ENCODE measurements at regions of chr12 and their contacts with region 1.

Region 1: DNA sequence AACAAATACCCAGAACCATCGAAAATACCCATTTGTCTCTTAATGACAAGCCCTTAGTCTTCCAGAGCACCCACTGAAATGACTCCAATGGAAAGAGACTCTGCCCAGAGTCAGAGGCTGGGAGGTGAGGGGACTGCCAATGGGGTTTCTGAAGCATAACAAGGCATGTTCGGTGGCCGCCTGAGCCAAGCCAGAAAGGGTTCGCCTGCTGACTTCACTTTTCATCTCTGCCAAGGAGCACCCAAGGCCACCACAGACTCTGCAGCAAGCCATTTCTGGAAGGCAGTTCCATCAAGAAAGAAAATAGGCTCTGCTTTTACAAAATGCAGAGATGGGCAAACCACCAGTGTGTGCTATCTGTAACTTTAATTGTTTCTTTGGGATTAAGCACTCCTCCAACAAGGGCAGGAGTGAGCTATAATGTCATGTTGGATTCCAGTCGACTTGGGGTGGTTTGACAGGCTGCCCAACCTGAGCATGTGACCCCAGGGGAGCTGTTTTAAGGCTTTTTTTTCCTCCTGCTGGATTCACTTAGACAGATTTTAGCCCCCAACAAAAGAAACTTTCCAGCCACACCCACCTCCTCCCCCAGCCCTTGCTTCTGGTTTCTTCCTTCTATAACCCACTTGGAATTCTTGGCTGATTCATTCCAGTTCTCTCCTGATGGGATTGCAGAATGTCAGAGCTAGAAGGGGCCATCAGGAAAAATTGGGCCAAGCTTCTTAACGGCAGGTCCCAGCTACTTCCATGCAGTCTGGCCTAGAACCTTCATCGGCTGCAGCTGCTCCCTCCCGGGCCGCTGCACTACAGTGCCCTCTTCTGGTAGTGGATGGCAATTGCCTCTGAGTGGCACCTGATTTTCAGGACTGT is 24.1 kb downstream of the CKAP4 start:
- DNase-seq: peak; percentile 77
- H3K4me3 ChIP-seq: no peak overlapping the region
- H3K27ac ChIP-seq: no peak overlapping the region
- H3K4me1 ChIP-seq: peaks cover 0 to 10% (median 8%) of the 10 kb centered on the region in 4 donors
- H3K27me3 ChIP-seq: no peaks in the 10 kb centered on the region
- CTCF ChIP-seq: peak; percentile 87 to 96 (median 93)
- EP300 ChIP-seq: no peak
- POLR2A ChIP-seq: no peak

Region 2: DNA sequence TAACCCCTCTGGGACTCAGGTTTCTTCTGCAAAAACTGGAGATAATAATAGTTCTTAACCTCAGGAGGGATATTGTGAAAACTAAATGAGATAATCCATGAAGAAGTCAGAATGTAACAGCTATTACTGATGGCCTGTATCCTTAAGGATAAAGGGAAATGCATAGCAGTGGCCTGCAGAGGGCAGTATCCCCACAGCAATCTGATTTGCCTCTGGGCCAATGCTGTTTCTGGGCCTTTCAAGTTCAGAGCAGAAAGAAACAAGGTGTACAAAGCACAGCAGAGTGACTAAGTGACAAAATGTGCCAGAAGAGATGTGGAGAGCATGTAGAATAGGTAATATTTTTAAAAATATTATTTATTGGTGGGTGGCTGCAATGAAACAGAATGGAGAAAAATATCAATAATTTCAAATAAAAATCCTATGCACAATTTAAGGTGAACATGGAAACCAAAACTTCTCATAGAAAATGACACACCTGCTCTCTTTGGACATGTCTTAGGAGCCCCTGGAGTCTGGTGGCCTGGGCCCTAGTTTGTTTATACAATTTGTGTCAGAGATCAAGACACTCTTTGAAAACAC is 803.0 kb before region 1 on chr12:
- in situ Hi-C with region 1: loop called in 2 of 4 experiments (anchors 10 kb)
- intact Hi-C with region 1: no loop called
- DNase-seq: peak; percentile 76
- H3K4me3 ChIP-seq: no peak overlapping the region
- H3K27ac ChIP-seq: no peak overlapping the region
- H3K4me1 ChIP-seq: no peaks in the 10 kb centered on the region
- H3K27me3 ChIP-seq: no peaks in the 10 kb centered on the region
- CTCF ChIP-seq: peak; percentile 84 to 91 (median 90)
- EP300 ChIP-seq: no peak
- POLR2A ChIP-seq: no peak

Region 3: GRCh38 chr12:105427883-105428282 is 795.8 kb before region 1 on chr12:
- in situ Hi-C with region 1: loop called in 2 of 4 experiments (anchors 10 kb)
- intact Hi-C with region 1: loop called (anchors 1 kb)
- DNase-seq: no peak
- H3K4me3 ChIP-seq: no peak overlapping the region
- H3K27ac ChIP-seq: no peak overlapping the region
- H3K4me1 ChIP-seq: no peaks in the 10 kb centered on the region
- H3K27me3 ChIP-seq: no peaks in the 10 kb centered on the region
- CTCF ChIP-seq: no peak
- EP300 ChIP-seq: no peak
- POLR2A ChIP-seq: no peak

Region 4: GRCh38 chr12:106282457-106283097 is 58.9 kb after region 1 on chr12:
- in situ Hi-C with region 1: loop called in 2 of 4 experiments (anchors 5 kb)
- intact Hi-C with region 1: loop called (anchors 1 kb)
- DNase-seq: peak; percentile 57
- H3K4me3 ChIP-seq: no peak overlapping the region
- H3K27ac ChIP-seq: peak overlapping the region in 1 of 4 donors; percentile 49
- H3K4me1 ChIP-seq: peaks cover 0 to 14% (median 2%) of the 10 kb centered on the region in 4 donors
- H3K27me3 ChIP-seq: no peaks in the 10 kb centered on the region
- CTCF ChIP-seq: peak; percentile 70 to 90 (median 72)
- EP300 ChIP-seq: no peak
- POLR2A ChIP-seq: no peak

Region 5: GRCh38 chr12:106357549-106358395 is 134.1 kb after region 1 on chr12 and contains the start of gene POLR3B:
- in situ Hi-C with region 1: loop called (anchors 10 kb)
- intact Hi-C with region 1: no loop called
- DNase-seq: peak; percentile 96
- H3K4me3 ChIP-seq: peak within 1 kb of the TSS; percentile 37 to 71 (median 58)
- H3K27ac ChIP-seq: peak within 1 kb of the TSS; percentile 91 to 96 (median 94)
- H3K4me1 ChIP-seq: peaks cover 9 to 22% (median 16%) of the 10 kb centered on the region in 4 donors
- H3K27me3 ChIP-seq: no peaks in the 10 kb centered on the region
- CTCF ChIP-seq: peak; percentile 81 to 94 (median 85)
- EP300 ChIP-seq: no peak
- POLR2A ChIP-seq: peak; percentile 90
- total RNA-seq, gene POLR3B: 5.6 to 8.4 (median 7.7) TPM